Activated T-helper 2 cell treated with anti-CD3 and anti-CD28 coated beads, Interferon-gamma antibody, Interleukin-2, Interleukin-4, amounts not matched to agents 10 μg/mL and 5 μg/mL and 100 μg/mL, durations not matched to agents 14 hours and 24 hours and 36 hours (primary cell): ENCODE measurements at regions of chr17 and their contacts with region 1.

Region 1: DNA sequence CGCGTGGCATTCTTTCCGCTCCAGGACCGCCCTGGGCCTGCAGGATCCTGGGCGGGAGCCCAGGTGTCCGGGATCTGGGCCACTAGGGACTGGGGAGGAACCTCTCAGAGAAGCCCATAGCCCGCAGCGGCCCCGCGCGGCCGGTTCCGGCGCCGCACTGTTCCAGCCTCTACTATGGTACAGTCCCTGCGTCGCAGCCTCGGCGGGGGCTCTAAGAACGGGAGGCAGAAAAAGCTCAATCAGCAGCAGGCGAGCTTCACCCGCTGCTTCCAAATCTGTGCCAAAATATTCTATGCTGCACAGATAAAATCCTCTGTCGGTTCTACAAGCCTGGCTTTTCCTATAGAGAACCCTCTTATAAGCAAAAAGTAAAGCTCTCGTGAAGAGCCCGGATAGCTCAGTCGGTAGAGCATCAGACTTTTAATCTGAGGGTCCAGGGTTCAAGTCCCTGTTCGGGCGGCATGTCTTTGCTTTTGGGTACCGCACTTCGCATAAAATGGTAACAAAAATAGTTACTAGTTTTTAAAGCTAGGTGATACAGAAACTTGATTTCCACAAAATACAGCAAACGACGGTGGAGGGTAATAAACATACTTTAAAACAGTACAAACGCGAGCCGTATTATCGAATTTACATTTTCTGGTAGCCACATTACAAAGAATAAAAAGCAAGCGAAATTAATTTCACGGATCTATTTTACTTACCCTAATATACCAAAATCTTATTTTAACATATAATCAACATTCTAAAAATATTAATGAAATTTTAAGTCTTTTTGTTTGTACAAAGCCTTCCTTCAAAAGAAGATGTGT is 661 bp upstream of the ALOXE3 start:
- DNase-seq: peak; percentile 79
- H3K4me3 Mint-ChIP-seq: peak overlapping the region; percentile 89
- H3K27ac Mint-ChIP-seq: peak overlapping the region; percentile 81
- H3K4me1 Mint-ChIP-seq: peaks cover 42% of the 10 kb centered on the region
- H3K27me3 Mint-ChIP-seq: peaks cover 48% of the 10 kb centered on the region

Region 2: DNA sequence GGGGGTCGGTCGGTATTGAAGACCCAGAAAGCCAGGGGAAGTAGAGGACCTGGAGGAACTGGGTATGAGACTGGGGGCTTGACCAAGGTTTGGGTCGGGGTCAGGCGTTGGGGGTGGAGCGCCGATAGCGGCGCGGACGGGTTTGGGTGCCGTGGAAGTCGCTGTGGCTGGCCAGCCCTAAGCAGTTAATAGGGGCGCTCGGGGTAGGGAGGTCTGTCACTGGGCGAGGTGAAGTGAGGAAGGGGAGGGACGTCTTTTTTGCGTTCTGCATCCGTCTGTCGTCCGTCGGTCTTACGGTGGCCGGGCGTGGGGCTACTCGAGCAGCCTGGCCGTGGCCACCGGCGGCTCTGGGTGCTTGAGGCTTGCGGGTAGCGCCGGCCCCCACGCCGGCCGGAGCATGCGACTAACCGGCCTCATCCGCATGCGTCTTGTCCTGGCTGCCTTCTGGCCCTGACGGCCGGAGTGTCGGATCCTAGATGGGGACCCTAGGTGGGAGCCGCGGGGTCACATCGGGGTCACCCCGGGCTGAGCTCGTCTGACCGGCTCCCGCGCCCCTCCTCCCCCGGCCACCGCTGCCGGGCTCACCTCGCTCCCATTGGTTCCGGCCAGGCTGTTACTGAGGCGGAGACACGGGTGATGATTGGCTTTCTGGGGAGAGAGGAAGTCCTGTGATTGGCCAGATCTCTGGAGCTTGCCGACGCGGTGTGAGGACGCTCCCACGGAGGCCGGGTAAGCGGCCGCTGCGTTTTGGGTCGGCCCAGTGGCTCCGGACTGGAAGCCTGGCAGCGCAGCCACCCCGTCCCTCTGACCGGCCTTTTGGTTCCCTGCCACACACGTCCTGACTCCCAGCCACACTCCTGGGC is 274.5 kb before region 1 on chr17:
- intact Hi-C with region 1: loop called (anchors 5 kb)
- DNase-seq: peak; percentile 86
- H3K4me3 Mint-ChIP-seq: peak overlapping the region; percentile 90
- H3K27ac Mint-ChIP-seq: peak overlapping the region; percentile 100
- H3K4me1 Mint-ChIP-seq: peaks cover 23% of the 10 kb centered on the region
- H3K27me3 Mint-ChIP-seq: no peaks in the 10 kb centered on the region

Region 3: DNA sequence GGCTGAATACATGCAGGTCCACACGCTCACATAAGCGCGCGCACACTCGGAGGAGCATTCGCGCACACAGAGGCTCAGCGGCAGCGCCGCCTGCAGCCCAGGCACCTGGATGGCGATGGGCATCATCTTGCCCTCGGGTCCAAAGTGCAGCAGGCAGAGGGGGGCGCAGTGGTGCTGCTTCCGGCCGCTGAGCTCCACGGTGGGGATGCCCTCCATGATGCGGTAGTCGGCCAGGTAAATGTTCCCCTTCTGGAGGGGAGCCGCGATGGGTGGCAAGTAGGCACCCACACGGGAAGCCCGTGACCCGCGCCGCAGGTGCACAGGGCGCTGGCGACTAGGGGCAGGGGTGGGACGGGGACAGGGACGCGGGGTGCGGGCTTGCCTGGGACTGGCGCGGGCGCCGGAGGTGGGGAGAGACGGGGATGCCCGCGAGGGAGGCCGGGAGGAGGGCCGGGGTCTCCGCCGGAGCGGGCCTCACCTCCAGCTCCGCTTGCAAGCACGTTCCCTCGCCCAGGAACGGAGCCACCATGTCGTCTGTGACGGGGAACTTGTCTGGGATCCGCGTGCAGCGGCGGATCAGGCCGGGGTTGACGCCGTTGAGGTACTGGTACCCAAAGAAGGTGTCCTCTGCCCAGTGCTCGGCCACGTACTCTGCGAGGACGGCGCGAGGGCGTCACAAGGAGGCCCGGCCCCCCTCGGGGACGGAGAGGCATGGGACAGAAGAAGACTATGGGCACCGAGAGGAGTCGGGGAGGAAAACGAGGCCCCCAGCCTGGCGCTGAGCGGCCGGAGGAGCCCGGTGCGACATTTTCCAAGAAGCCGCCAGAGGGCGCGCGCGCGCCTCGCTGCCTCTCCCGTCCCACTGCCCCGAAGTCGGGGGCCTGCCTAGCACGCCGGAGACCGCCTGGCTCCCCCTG is 39.4 kb before region 1 on chr17:
- intact Hi-C with region 1: loop called (anchors 1 kb)
- DNase-seq: peak; percentile 70
- H3K4me3 Mint-ChIP-seq: peak overlapping the region; percentile 86
- H3K27ac Mint-ChIP-seq: peak overlapping the region; percentile 74
- H3K4me1 Mint-ChIP-seq: peaks cover 5% of the 10 kb centered on the region
- H3K27me3 Mint-ChIP-seq: peaks cover 17% of the 10 kb centered on the region

Region 4: DNA sequence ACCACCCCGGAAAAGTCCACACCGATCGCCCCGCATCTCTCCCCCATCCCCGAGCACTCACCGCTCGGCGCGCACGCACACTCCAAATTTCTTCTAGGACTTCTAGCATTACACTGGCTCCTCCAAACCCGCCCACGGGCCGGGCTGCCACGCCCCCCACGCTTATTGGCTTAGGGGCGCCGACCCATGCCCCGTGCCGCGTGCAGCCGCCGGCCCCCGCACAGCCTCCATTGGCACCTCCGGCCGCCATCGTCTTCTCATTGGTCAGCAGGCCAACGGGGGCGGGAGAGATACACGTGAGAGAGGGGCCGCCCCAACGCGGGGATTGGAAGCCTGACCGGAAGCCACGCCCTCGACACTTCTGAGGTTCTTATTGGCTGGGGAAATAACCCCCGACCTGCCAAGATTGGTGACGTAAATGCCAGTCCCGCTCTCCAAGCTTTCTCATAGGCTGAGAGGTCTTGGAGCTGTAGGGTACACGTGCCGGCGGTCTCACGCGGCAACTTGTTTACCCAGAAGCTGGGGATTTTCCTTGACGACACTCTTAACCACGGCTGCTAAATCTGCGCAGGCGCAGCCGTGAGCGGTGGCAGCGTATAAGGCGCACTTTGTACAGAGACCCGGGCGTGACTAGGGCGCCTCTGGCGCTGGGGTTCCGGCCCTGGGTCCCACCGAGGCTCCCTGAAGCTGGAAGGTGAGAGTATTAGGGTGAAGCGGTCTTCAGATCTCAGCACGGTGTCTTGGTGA is 37.4 kb after region 1 on chr17:
- intact Hi-C with region 1: loop called (anchors 1 kb)
- DNase-seq: peak; percentile 100
- H3K4me3 Mint-ChIP-seq: no peak overlapping the region
- H3K27ac Mint-ChIP-seq: no peak overlapping the region
- H3K4me1 Mint-ChIP-seq: peaks cover 49% of the 10 kb centered on the region
- H3K27me3 Mint-ChIP-seq: no peaks in the 10 kb centered on the region

Region 5: DNA sequence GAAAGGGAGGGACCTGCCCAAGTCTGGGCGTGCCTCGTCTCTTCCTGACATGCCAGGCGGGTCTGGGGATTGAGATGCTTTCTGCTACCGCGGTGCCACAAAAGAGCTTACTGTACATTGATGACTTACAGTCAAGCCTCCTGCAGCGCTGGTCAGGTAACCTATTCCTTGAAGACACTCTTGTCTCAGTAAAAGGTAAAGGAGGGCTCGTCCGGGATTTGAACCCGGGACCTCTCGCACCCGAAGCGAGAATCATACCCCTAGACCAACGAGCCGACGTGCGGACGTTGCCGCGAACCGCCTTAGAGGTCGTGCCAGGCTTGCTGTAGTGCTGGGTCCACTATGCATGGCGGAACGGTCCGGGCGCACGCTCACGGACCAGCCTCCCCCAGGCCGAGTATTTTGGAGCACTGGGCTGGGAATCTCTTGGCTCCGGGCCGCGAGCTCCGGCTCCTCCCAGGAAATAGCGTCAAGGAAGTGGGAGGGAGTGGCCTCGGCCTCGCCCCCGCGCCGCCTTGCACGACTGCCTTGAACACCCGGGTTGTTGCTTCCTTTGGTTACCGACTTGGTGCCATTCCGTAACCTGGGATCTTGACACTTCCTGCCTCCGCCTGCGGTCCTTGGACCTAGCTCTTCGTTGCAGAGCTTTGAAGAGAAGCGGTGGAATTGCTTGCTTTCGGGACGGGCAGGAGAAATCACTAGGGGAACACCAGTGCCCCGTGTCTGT is 103.8 kb after region 1 on chr17:
- intact Hi-C with region 1: loop called (anchors 1 kb)
- DNase-seq: peak; percentile 85
- H3K4me3 Mint-ChIP-seq: peak overlapping the region; percentile 97
- H3K27ac Mint-ChIP-seq: peak overlapping the region; percentile 96
- H3K4me1 Mint-ChIP-seq: peaks cover 43% of the 10 kb centered on the region
- H3K27me3 Mint-ChIP-seq: no peaks in the 10 kb centered on the region

Region 6: GRCh38 chr17:8383143-8383822 is 264.3 kb after region 1 on chr17 and contains the start of gene RPL26:
- intact Hi-C with region 1: loop called (anchors 2 kb)
- DNase-seq: peak; percentile 94
- H3K4me3 Mint-ChIP-seq: peak within 1 kb of the TSS; percentile 99
- H3K27ac Mint-ChIP-seq: peak within 1 kb of the TSS; percentile 96
- H3K4me1 Mint-ChIP-seq: peaks cover 33% of the 10 kb centered on the region
- H3K27me3 Mint-ChIP-seq: no peaks in the 10 kb centered on the region
- total RNA-seq, gene RPL26: 2,352 and 2,379 TPM in 2 replicates